Endothelial cell of umbilical vein (primary cell): ENCODE measurements at regions of chr7 and their contacts with region 1.

Region 1: DNA sequence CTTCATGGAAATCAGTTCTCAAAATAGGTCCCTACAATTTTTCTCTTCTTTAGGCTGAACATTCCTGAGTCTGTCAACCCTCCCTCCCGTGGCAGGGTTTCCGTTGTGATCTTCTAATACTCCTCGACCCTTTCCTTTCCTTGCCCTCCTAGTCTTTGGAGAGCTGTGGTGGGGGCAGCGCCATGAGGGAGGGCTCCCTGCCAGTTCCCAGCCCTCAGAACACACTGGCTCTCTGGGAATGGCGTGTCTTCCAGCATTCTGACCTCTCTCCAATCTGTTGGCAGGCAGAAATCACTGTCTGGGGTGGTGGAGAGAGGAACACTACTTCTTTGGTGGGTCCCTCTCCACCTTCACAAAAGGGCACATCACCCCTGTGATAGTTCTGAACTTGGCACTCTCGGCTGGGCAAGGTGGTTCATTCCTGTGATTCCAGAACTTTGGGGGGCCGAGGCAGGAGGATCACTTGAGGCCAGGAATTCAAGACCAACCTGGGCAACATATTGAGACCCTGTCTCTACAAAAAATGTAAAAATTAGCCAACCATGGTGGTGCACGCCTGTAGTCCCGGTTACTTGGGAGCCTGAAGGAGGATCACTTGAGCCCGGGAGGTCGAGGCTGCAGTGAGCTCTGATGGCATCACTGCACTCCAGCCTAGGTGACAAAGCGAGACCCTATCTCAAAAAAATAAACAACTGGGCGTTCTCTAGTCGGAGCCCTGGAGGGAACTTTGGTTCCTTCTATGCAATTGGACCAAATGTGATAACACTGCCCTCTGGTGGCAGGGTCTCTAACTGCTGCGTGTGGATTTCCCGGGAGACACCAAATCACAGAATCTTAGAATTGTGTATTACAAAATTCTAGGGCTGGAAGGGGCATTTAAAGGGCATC is 13.1 kb upstream of the ARPC1A start:
- DNase-seq: peak; percentile 59
- H3K4me3 ChIP-seq: no peak overlapping the region
- H3K27ac ChIP-seq: no peak overlapping the region
- H3K4me1 ChIP-seq: no peaks in the 10 kb centered on the region
- H3K27me3 ChIP-seq: no peaks in the 10 kb centered on the region
- CTCF ChIP-seq: peak; percentile 82 to 83
- POLR2A ChIP-seq: no peak

Region 2: DNA sequence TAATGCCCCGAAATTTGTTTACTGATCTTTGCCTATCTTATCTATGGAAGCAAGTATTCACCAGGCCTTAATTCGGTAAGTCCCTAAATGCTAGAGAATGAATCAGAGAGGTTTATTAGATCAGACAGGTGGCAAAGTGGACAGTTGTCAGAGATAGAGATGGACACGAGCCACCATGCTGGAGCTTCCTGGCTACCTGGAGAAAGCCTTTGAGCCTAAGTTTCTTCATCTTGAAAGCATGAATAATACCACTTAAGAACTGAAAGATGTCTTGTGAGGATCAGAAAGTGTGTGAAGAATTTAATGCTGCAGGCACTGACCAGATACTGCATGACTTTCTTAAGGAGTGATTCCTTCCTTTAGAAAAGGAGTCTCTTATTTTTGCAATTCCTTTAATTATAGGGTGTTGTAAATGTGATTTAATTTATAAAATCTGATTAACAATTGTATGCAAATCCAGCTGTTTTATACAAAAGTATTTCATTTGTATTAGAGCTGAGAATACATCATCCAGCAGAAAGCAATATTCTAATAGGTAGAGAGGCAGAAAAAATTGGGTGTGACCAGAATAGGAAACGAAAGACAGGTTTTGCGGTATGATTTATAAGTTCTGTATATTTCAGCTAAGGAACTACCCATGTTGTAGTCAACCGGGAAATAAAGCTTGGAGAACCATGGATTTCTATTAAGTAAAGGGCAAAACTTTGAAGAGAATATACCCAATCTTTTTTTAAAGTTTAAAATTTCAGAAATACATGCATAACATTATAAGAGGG is 251.4 kb before region 1 on chr7:
- CTCF ChIA-PET with region 1: no interaction called
- POLR2A ChIA-PET with region 1: no interaction called
- dilution Hi-C with region 1: loop called (anchors 10 kb)
- intact Hi-C with region 1: no loop called
- DNase-seq: no peak
- H3K4me3 ChIP-seq: no peak overlapping the region
- H3K27ac ChIP-seq: no peak overlapping the region
- H3K4me1 ChIP-seq: no peaks in the 10 kb centered on the region
- H3K27me3 ChIP-seq: no peaks in the 10 kb centered on the region
- CTCF ChIP-seq: no peak
- POLR2A ChIP-seq: no peak